Testis (tissue), 5 donors: ENCODE measurements at regions of chr5 and their contacts with region 1.

Region 1: DNA sequence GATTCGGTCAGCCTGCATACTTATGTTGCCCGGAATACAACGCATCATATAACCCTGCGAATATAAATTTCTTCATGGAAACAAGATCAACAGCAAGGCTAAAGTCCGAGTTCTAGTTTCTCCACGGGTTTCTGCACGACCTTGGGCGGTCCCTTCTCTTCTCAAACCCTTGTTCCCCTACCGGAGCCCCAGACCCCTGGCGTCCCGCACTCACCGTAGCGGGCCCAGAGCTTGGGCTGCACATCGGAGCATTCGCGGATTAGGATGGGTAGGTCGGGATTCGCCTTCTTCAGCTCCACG is 438 bp downstream of the NDUFA2 start:
- DNase-seq: no peak
- H3K4me3 ChIP-seq: peak overlapping the region; percentile 88 to 96
- H3K27ac ChIP-seq: peak overlapping the region; percentile 53 to 79
- H3K4me1 ChIP-seq: peaks cover 13% of the 10 kb centered on the region
- H3K27me3 ChIP-seq: no peaks in the 10 kb centered on the region
- CTCF ChIP-seq: no peak
- POLR2A ChIP-seq: no peak

Region 2: DNA sequence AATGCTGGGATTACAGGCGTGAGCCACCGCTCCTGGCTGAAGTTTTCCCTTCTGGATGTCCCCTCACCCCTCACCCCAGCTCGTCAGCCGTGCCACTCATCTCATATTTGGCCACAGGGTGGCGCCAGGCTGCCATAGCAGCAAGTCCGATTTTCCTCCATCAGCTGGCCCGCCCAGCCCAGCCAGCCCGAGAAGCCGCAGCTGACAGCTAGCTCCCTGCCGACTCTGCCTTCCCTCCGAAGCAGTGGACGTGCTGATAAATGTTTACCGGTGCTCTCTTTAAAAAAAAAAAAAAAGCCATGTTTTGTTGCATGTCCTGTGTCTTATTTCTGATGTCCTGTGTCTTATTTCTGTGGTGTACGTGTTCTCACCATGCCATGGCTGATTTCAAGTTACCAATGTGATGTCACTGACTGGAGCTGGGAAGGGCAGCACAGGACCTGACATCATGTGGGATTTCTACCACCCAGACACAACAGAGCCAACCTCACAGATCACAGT is 402.4 kb before region 1 on chr5:
- intact Hi-C with region 1: no loop called
- DNase-seq: peak; percentile 95
- H3K4me3 ChIP-seq: no peak overlapping the region
- H3K27ac ChIP-seq: no peak overlapping the region
- H3K4me1 ChIP-seq: peaks cover 36% of the 10 kb centered on the region
- H3K27me3 ChIP-seq: no peaks in the 10 kb centered on the region
- CTCF ChIP-seq: peak; percentile 90 to 94 (median 90)
- POLR2A ChIP-seq: no peak

Region 3: DNA sequence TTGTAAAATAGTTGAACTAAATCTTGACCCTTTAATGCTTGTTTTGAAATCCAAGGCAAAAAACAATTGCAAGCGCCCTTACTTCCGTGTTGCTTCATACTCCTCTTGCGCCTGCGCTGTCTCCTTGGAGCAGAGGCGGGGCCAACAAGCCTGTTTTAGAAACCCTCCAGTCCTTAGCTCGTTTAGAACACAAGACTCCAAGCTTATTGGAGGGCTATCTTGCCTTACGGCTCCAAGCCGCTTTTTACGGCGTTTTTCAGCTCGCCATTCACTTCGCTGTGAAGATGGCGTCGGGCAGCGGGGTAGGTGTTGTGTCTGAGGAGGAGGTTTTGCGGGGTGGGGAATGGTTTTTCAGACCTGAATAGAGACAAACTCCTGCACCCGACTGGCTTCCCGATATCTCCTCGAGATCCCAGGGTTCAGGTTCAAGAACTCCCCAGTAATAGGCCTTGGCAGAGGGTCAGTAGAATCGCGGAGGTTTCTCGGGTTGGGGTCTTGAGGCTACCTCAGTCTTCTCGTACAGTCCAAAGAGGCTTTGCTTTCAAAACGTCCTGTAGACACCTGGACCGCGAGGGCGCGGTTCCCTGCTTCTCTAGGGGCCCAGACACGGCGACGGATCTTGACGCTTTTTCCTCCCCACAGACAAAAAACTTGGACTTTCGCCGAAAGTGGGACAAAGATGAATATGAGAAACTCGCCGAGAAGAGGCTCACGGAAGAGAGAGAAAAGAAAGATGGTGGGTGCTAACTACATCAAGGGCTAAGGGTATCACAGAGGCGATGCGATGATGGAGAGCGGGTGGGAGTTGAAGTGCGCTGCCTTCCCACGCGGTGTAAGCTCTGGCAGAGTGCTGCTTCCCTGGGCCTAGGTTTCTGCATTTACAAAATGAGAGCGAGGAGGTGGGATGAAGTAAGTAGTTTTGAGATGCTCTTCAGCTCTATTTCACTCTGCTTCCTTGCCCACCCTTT is 53.5 kb after region 1 on chr5 and contains the start of gene ZMAT2:
- intact Hi-C with region 1: loop called (anchors 10 kb)
- DNase-seq: peak; percentile 98
- H3K4me3 ChIP-seq: peak within 1 kb of the TSS; percentile 75 to 80
- H3K27ac ChIP-seq: peak within 1 kb of the TSS; percentile 59 to 81
- H3K4me1 ChIP-seq: peaks cover 14% of the 10 kb centered on the region
- H3K27me3 ChIP-seq: no peaks in the 10 kb centered on the region
- CTCF ChIP-seq: no peak
- POLR2A ChIP-seq: no peak
- total RNA-seq, gene ZMAT2: 28.5 to 30.2 TPM

Region 4: GRCh38 chr5:140916349-140916748 is 269.4 kb after region 1 on chr5:
- intact Hi-C with region 1: no loop called
- DNase-seq: no peak
- H3K4me3 ChIP-seq: no peak overlapping the region
- H3K27ac ChIP-seq: no peak overlapping the region
- H3K4me1 ChIP-seq: no peaks in the 10 kb centered on the region
- H3K27me3 ChIP-seq: no peaks in the 10 kb centered on the region
- CTCF ChIP-seq: no peak
- POLR2A ChIP-seq: no peak